ENCODE measurements at regions of chr3 and their contacts with region 1.

Region 1: DNA sequence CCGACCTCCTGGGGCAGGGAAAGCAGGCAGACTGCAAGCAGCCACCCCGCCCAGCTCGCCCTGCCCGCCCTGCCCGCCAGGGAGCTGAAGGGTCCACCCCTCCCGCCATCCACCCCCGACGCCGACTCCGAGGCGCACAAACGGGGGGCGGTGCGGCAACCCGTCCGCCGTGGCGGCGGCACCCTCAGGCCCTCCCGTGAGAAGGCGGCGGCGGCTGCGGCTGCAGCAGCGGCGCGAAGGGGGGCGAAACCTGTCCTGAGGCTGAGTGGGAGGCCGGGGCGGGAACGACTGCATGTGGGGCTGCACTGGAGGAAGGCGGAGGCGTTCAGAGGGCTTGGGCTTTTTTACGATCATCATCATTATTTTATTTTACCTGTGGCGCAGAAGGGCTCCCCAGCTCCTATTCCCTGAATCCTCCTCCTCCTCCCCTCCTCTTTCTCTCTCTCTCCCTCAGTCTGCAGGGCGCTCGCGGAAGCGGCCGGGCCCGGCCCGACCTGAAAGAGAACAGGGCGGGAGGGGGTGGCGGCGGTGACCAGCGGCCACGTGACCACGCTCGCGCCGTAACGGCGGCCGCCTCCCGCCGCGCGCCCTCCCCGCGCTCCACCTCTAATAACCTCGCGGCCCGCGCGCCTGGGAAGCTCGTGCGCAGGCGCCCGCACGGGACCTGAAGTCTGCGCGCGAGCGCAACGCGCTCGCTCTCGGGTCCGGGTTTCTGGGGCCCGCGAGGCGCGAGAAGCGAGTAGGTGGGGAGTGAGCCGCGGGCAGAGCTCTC is at the start of gene TBC1D5:
- DNase-seq: peak; percentile 94

Region 2: DNA sequence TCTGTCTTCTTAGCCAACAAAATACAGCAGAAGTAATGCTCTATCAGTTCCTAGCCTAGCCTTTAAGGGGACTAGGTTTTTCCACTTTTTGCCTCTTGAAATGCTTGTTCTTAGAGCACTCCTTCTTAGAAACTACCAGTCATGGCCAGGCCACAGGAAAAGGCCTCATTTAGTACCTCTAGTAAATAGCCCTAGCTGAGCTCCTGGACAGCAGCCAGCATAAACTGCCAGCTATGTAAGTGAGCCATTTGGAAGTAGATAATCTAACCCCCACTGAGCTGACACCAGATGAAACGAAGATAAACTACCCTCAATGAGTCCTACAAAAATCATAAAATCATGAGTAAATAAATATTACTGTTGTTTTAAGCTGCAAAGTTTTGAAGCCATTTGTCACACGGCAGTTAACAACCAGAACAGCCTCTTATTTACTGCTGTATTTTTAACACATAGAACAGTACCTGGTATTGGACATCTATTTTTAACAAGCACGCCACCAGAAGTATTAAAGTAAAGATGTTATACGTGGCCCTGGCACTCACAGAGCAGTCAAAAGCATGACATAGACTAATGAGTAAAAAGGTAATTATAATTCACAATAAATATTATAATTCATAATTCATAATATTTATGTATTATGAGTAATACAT is 11.9 kb before region 1 on chr3:
- CTCF ChIA-PET with region 1: interaction called, 4 read pairs
- POLR2A ChIA-PET with region 1: interaction called, 16 read pairs
- DNase-seq: peak; percentile 74